ENCODE measurements at regions of chr14 and their contacts with region 1.

Region 1: DNA sequence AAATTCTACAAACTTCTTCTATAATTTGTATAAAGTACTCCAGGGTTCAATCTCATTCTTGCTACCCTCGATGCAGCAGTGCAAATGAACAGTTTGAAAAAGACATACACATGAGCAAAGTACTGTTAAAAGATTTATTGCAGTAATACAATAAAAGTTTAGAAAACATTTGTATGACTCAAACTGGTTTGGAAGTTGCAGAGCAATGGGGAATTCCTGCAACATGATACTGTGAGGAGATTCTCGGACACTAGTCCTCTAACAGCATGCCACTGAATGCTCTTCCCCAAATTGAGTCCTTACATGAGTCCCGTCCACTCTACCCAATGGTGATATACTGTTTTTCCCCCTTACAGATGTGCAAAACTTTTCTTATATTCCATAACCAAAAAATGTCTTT is 45.4 kb downstream of the ATG14 start:
- DNase-seq: peak; percentile 96
- ATAC-seq: peak; percentile 97
- H3K4me3 ChIP-seq: peak overlapping the region; percentile 5; the same call in 1 of the 2 replicates
- H3K27ac ChIP-seq: peak overlapping the region; percentile 81
- H3K4me1 ChIP-seq: peaks cover 25% of the 10 kb centered on the region
- H3K27me3 ChIP-seq: no peaks in the 10 kb centered on the region
- CTCF ChIP-seq: no peak

Region 2: DNA sequence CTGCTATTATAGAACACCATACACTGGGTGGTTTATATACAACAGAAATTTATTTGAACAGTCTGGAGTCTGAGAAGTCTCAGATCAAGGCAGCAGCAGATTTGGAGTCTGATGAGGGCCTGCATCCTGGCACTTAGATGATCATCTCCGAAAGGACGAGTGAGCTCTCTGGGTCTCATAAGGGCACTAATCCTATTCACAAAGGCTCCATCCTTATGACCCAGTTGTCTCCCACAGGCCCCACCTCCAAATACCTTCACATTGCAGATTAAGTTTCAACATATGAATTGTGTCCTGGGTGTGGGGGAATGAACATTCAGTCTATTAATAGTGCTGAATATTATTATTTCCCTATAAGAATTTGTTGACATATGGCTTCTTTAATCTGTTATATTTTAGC is 41.5 kb before region 1 on chr14:
- CTCF ChIA-PET with region 1: no interaction called
- POLR2A ChIA-PET with region 1: interaction called, 15 read pairs
- intact Hi-C with region 1: no loop called
- DNase-seq: no peak
- ATAC-seq: no peak
- H3K4me3 ChIP-seq: no peak overlapping the region
- H3K27ac ChIP-seq: no peak overlapping the region
- H3K4me1 ChIP-seq: peaks cover under 1% of the 10 kb centered on the region; the same call in 1 of the 2 replicates
- H3K27me3 ChIP-seq: no peaks in the 10 kb centered on the region
- CTCF ChIP-seq: no peak